ENCODE measurements at regions of chr22 and their contacts with region 1.

Region 1: GRCh38 chr22:30114361-30114760 is 34.1 kb downstream of the HORMAD2 start:
- DNase-seq: no peak
- H3K4me3 ChIP-seq: no peak overlapping the region
- H3K27ac ChIP-seq: no peak overlapping the region
- H3K4me1 ChIP-seq: no peaks in the 10 kb centered on the region
- H3K27me3 ChIP-seq: no peaks in the 10 kb centered on the region
- CTCF ChIP-seq: no peak
- EP300 ChIP-seq: no peak
- POLR2A ChIP-seq: no peak

Region 2: GRCh38 chr22:30150212-30150611 is 35.9 kb after region 1 on chr22:
- intact Hi-C with region 1: no loop called
- DNase-seq: no peak
- H3K4me3 ChIP-seq: no peak overlapping the region
- H3K27ac ChIP-seq: no peak overlapping the region
- H3K4me1 ChIP-seq: no peaks in the 10 kb centered on the region
- H3K27me3 ChIP-seq: no peaks in the 10 kb centered on the region
- CTCF ChIP-seq: no peak
- EP300 ChIP-seq: no peak
- POLR2A ChIP-seq: no peak

Region 3: GRCh38 chr22:30205281-30206115 is 91.1 kb after region 1 on chr22:
- intact Hi-C with region 1: no loop called
- DNase-seq: peak; percentile 25 to 55
- H3K4me3 ChIP-seq: no peak overlapping the region
- H3K27ac ChIP-seq: peak overlapping the region; percentile 12 to 81 (median 62)
- H3K4me1 ChIP-seq: peaks cover 48 to 85% (median 57%) of the 10 kb centered on the region in 4 donors
- H3K27me3 ChIP-seq: no peaks in the 10 kb centered on the region
- CTCF ChIP-seq: no peak
- EP300 ChIP-seq: no peak
- POLR2A ChIP-seq: no peak

Region 4: GRCh38 chr22:30253205-30253852 is 139.0 kb after region 1 on chr22:
- intact Hi-C with region 1: loop called (anchors 5 kb)
- DNase-seq: peak; percentile 43 to 92
- H3K4me3 ChIP-seq: no peak overlapping the region
- H3K27ac ChIP-seq: peak overlapping the region; percentile 7 to 64 (median 57)
- H3K4me1 ChIP-seq: peaks cover 27 to 73% (median 42%) of the 10 kb centered on the region in 4 donors
- H3K27me3 ChIP-seq: peaks cover 0 to 14% (median 0%) of the 10 kb centered on the region in 3 donors
- CTCF ChIP-seq: no peak
- EP300 ChIP-seq: no peak
- POLR2A ChIP-seq: no peak

Measured in stomach (tissue), 19 donors.